Activated CD4-positive, alpha-beta memory T cell treated with anti-CD3 and anti-CD28 coated beads for 36 hours (primary cell): ENCODE measurements at regions of chr11 and their contacts with region 1.

Region 1: GRCh38 chr11:73578592-73579185 is 19.2 kb downstream of the FAM168A start:
- DNase-seq: peak; percentile 29
- H3K4me3 Mint-ChIP-seq: no peak overlapping the region
- H3K27ac Mint-ChIP-seq: peak overlapping the region; percentile 52
- H3K4me1 Mint-ChIP-seq: peaks cover 26% of the 10 kb centered on the region
- H3K27me3 Mint-ChIP-seq: no peaks in the 10 kb centered on the region

Region 2: GRCh38 chr11:73428699-73429098 is 150.0 kb before region 1 on chr11:
- CTCF ChIA-PET with region 1: no interaction called
- POLR2A ChIA-PET with region 1: no interaction called
- intact Hi-C with region 1: loop called (anchors 1 kb)
- DNase-seq: no peak
- H3K4me3 Mint-ChIP-seq: no peak overlapping the region
- H3K27ac Mint-ChIP-seq: peak overlapping the region; percentile 40
- H3K4me1 Mint-ChIP-seq: peaks cover 11% of the 10 kb centered on the region
- H3K27me3 Mint-ChIP-seq: no peaks in the 10 kb centered on the region

Region 3: DNA sequence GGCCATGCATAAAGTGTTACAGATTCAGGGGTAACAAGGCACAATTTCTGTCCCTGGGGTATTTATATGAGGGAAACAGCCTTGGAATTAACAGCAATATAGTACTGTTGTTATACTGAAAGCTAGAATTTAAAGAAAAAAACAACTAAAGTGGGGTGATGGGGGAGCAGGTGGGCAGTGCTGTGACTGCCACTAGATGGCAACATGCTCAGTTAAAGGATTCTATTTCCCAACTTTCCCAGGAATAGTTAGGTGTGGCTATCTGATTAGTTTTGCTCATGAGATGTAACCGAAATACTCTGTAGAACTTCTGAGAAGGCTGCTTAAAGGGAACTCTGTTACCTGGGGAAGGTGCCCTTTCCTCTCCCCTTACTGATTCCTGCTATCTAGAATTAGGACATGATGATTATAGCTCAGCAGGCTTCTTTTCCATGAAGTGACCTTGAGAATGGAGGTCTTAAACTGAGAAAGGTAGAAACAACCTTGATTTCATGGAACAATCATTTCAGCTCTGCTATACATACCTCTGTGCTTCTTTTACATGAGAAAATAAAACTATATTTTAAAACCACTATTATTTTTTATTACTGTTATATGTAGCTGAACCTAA is 99.8 kb before region 1 on chr11:
- CTCF ChIA-PET with region 1: no interaction called
- POLR2A ChIA-PET with region 1: no interaction called
- intact Hi-C with region 1: no loop called
- DNase-seq: no peak
- H3K4me3 Mint-ChIP-seq: no peak overlapping the region
- H3K27ac Mint-ChIP-seq: no peak overlapping the region
- H3K4me1 Mint-ChIP-seq: no peaks in the 10 kb centered on the region
- H3K27me3 Mint-ChIP-seq: no peaks in the 10 kb centered on the region

Region 4: DNA sequence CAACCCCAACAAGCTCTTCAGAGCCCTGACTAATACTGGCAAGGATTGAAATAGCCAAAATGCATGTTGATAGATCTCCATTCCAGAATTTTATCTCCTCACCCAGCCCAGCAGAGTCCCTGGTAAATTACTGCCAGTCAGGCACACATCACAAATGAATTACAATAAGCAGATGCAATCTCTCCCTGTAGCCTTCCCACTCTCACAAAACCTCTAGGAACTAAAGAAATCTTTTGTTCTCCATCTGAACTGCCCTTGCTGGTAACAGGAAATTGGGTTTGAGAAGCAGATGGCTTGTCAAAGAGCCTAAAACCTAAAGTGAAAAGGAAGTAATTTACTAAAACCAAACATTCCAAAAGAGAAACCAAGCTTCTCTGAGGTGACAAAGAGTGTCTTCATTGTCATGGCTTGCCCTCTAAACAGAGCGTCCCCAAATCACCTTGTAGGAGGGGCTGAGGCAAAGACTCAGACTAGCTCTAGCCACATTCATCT is 40.3 kb before region 1 on chr11:
- CTCF ChIA-PET with region 1: interaction called, 3 read pairs
- POLR2A ChIA-PET with region 1: interaction called, 3 read pairs
- intact Hi-C with region 1: loop called (anchors 1 kb)
- DNase-seq: peak; percentile 32
- H3K4me3 Mint-ChIP-seq: no peak overlapping the region
- H3K27ac Mint-ChIP-seq: peak overlapping the region; percentile 69
- H3K4me1 Mint-ChIP-seq: peaks cover 29% of the 10 kb centered on the region
- H3K27me3 Mint-ChIP-seq: no peaks in the 10 kb centered on the region

Region 5: GRCh38 chr11:73597956-73598718 is 19.4 kb after region 1 on chr11 and contains the start of gene FAM168A:
- CTCF ChIA-PET with region 1: no interaction called
- POLR2A ChIA-PET with region 1: no interaction called
- intact Hi-C with region 1: loop called (anchors 2 kb)
- DNase-seq: peak; percentile 95
- H3K4me3 Mint-ChIP-seq: peak within 1 kb of the TSS; percentile 86
- H3K27ac Mint-ChIP-seq: peak within 1 kb of the TSS; percentile 84
- H3K4me1 Mint-ChIP-seq: peaks cover 29% of the 10 kb centered on the region
- H3K27me3 Mint-ChIP-seq: no peaks in the 10 kb centered on the region
- total RNA-seq, gene FAM168A: 12.2 TPM